ENCODE measurements at regions of chr2 and their contacts with region 1.

Region 1: GRCh38 chr2:241803387-241804325 is 5.3 kb upstream of the NEU4 start:
- DNase-seq: peak; percentile 58
- H3K4me3 Mint-ChIP-seq: peak overlapping the region; percentile 63
- H3K27ac Mint-ChIP-seq: no peak overlapping the region
- H3K4me1 Mint-ChIP-seq: peaks cover 9% of the 10 kb centered on the region
- H3K27me3 Mint-ChIP-seq: peaks cover 6% of the 10 kb centered on the region

Region 2: GRCh38 chr2:241734467-241735208 is 69.0 kb before region 1 on chr2 and contains the start of gene D2HGDH:
- CTCF ChIA-PET with region 1: interaction called, 10 read pairs
- POLR2A ChIA-PET with region 1: no interaction called
- intact Hi-C with region 1: no loop called
- DNase-seq: peak; percentile 95
- H3K4me3 Mint-ChIP-seq: peak within 1 kb of the TSS; percentile 81
- H3K27ac Mint-ChIP-seq: peak within 1 kb of the TSS; percentile 70
- H3K4me1 Mint-ChIP-seq: peaks cover 49% of the 10 kb centered on the region
- H3K27me3 Mint-ChIP-seq: no peaks in the 10 kb centered on the region
- total RNA-seq, gene D2HGDH: 27.5 to 28.2 TPM

Region 3: DNA sequence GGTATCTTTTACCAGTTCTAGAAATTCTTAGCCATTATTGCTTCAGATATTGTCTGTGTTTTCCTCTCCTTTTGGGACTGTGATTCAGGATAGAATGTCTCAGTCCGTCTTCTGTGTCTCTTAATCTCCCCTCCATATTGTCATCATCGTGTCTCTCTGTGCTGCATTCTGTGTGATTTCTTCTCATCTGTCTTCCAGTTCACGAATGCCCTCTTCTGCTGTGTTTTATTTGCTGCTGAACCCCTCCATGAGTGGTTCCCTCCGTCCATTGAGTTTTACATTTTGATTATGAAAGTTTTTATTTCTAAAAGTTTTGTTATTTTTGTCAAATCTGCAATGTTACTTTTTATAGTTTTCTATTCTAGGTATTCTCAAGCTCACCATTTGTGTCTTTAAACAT is 57.6 kb before region 1 on chr2:
- CTCF ChIA-PET with region 1: no interaction called
- POLR2A ChIA-PET with region 1: no interaction called
- intact Hi-C with region 1: no loop called
- DNase-seq: no peak
- H3K4me3 Mint-ChIP-seq: no peak overlapping the region
- H3K27ac Mint-ChIP-seq: no peak overlapping the region
- H3K4me1 Mint-ChIP-seq: peaks cover 7% of the 10 kb centered on the region
- H3K27me3 Mint-ChIP-seq: no peaks in the 10 kb centered on the region

Region 4: GRCh38 chr2:241774646-241775222 is 28.9 kb before region 1 on chr2:
- CTCF ChIA-PET with region 1: no interaction called
- POLR2A ChIA-PET with region 1: no interaction called
- intact Hi-C with region 1: no loop called
- DNase-seq: peak; percentile 7
- H3K4me3 Mint-ChIP-seq: no peak overlapping the region
- H3K27ac Mint-ChIP-seq: no peak overlapping the region
- H3K4me1 Mint-ChIP-seq: peaks cover 6% of the 10 kb centered on the region
- H3K27me3 Mint-ChIP-seq: no peaks in the 10 kb centered on the region

Region 5: GRCh38 chr2:241844066-241844728 is 40.5 kb after region 1 on chr2:
- CTCF ChIA-PET with region 1: no interaction called
- POLR2A ChIA-PET with region 1: interaction called, 5 read pairs
- intact Hi-C with region 1: loop called (anchors 5 kb)
- DNase-seq: peak; percentile 94
- H3K4me3 Mint-ChIP-seq: peak overlapping the region; percentile 72
- H3K27ac Mint-ChIP-seq: peak overlapping the region; percentile 82
- H3K4me1 Mint-ChIP-seq: peaks cover 39% of the 10 kb centered on the region
- H3K27me3 Mint-ChIP-seq: peaks cover 5% of the 10 kb centered on the region

Region 6: GRCh38 chr2:241959751-241960269 is 156.2 kb after region 1 on chr2:
- CTCF ChIA-PET with region 1: no interaction called
- POLR2A ChIA-PET with region 1: no interaction called
- intact Hi-C with region 1: no loop called
- DNase-seq: no peak
- H3K4me3 Mint-ChIP-seq: no peak overlapping the region
- H3K27ac Mint-ChIP-seq: no peak overlapping the region
- H3K4me1 Mint-ChIP-seq: peaks cover 6% of the 10 kb centered on the region
- H3K27me3 Mint-ChIP-seq: no peaks in the 10 kb centered on the region

Region 7: GRCh38 chr2:242060212-242060835 is 256.7 kb after region 1 on chr2:
- CTCF ChIA-PET with region 1: no interaction called
- POLR2A ChIA-PET with region 1: no interaction called
- intact Hi-C with region 1: no loop called
- DNase-seq: no peak
- H3K4me3 Mint-ChIP-seq: no peak overlapping the region
- H3K27ac Mint-ChIP-seq: no peak overlapping the region
- H3K4me1 Mint-ChIP-seq: no peaks in the 10 kb centered on the region
- H3K27me3 Mint-ChIP-seq: peaks cover 19% of the 10 kb centered on the region

Measured in activated CD4-positive, alpha-beta memory T cell treated with anti-CD3 and anti-CD28 coated beads for 36 hours (primary cell).